Right ventricle myocardium superior (tissue), 1 donor: ENCODE measurements at regions of chr11 and their contacts with region 1.

Region 1: GRCh38 chr11:12008790-12009616 is 577 bp upstream of the DKK3 start:
- DNase-seq: peak; percentile 71
- ATAC-seq: peak; percentile 83

Region 2: GRCh38 chr11:11937957-11938356 is 71.0 kb before region 1 on chr11:
- intact Hi-C with region 1: no loop called
- DNase-seq: no peak
- ATAC-seq: no peak

Region 3: GRCh38 chr11:11966826-11967668 is 42.0 kb before region 1 on chr11:
- intact Hi-C with region 1: loop called (anchors 5 kb)
- DNase-seq: peak; percentile 88
- ATAC-seq: peak; percentile 62

Region 4: DNA sequence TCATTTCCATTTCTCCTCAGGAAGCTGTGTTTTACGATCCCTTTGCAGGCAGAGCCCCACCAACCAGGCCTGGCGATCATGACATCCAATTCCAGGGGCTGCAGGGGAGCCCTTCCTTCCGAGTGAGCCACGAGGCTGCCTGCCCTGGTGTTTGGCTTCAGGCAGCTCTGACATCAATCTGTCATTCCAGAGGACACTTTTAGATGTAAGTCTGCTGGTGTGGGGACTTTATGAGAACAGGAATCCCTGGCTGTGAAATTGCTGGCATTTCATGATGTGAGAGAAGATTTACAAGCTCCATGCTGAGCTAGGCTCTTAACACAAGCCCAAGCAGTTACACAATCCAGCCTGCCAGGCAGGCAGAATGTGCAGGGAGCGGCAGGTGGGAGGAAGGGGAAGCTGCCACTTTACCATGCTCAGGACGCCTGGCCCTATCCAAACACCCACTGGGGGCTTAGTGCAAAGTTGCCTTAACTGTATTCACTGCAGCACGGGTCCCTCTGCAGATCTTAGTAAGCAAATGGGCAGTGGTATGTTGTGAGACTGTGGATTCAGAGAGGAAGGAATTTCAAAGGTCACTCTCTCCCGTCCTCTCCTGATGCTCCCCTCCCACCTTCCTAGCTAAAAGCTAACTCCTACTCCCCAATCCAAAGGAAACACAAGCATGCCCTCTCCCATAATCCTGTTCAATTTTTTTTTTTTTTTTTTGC is 58.0 kb after region 1 on chr11:
- intact Hi-C with region 1: no loop called
- DNase-seq: peak; percentile 54
- ATAC-seq: peak; percentile 66

Region 5: GRCh38 chr11:12216671-12217374 is 207.8 kb after region 1 on chr11:
- intact Hi-C with region 1: no loop called
- DNase-seq: peak; percentile 53
- ATAC-seq: peak; percentile 15

Region 6: GRCh38 chr11:12409991-12410728 is 401.2 kb after region 1 on chr11:
- intact Hi-C with region 1: no loop called
- DNase-seq: no peak
- ATAC-seq: peak; percentile 30